ENCODE measurements at regions of chr18 and their contacts with region 1.

Region 1: GRCh38 chr18:75041586-75041985 is 167.4 kb downstream of the PTGR3 start:
- DNase-seq: no peak
- H3K4me3 ChIP-seq: no peak overlapping the region
- H3K27ac ChIP-seq: no peak overlapping the region
- H3K4me1 ChIP-seq: peaks cover 0 to 9% (median 0%) of the 10 kb centered on the region in 4 experiments; a peak in 1 of 7 replicates
- H3K27me3 ChIP-seq: no peaks in the 10 kb centered on the region; a peak in 1 of 7 replicates
- CTCF ChIP-seq: peak in 2 of 3 experiments; percentile 28 to 64; a peak in 2 of 4 replicates
- EP300 ChIP-seq: no peak
- POLR2A ChIP-seq: no peak
- RAD21 ChIP-seq: peak; percentile 42 to 48

Region 2: GRCh38 chr18:74896390-74896991 is 145.1 kb before region 1 on chr18:
- CTCF ChIA-PET with region 1: interaction called, 14 read pairs
- POLR2A ChIA-PET with region 1: no interaction called
- DNase-seq: peak in 1 of 2 experiments; percentile 48
- H3K4me3 ChIP-seq: no peak overlapping the region
- H3K27ac ChIP-seq: no peak overlapping the region
- H3K4me1 ChIP-seq: peaks cover 0 to 3% (median 0%) of the 10 kb centered on the region in 4 experiments; a peak in 1 of 7 replicates
- H3K27me3 ChIP-seq: no peaks in the 10 kb centered on the region
- CTCF ChIP-seq: peak; percentile 78 to 90 (median 85)
- EP300 ChIP-seq: no peak
- POLR2A ChIP-seq: no peak
- RAD21 ChIP-seq: peak; percentile 82 to 91

Region 3: GRCh38 chr18:74957601-74958224 is 83.9 kb before region 1 on chr18:
- CTCF ChIA-PET with region 1: no interaction called
- POLR2A ChIA-PET with region 1: no interaction called
- DNase-seq: no peak
- H3K4me3 ChIP-seq: no peak overlapping the region
- H3K27ac ChIP-seq: no peak overlapping the region
- H3K4me1 ChIP-seq: no peaks in the 10 kb centered on the region; a peak in 1 of 7 replicates
- H3K27me3 ChIP-seq: no peaks in the 10 kb centered on the region
- CTCF ChIP-seq: no peak
- EP300 ChIP-seq: no peak
- POLR2A ChIP-seq: no peak
- RAD21 ChIP-seq: no peak

Region 4: GRCh38 chr18:75023473-75023872 is 18.1 kb before region 1 on chr18:
- CTCF ChIA-PET with region 1: interaction called, 15 read pairs
- POLR2A ChIA-PET with region 1: no interaction called
- DNase-seq: no peak
- H3K4me3 ChIP-seq: no peak overlapping the region
- H3K27ac ChIP-seq: no peak overlapping the region
- H3K4me1 ChIP-seq: no peaks in the 10 kb centered on the region
- H3K27me3 ChIP-seq: no peaks in the 10 kb centered on the region
- CTCF ChIP-seq: no peak
- EP300 ChIP-seq: no peak
- POLR2A ChIP-seq: no peak
- RAD21 ChIP-seq: no peak

Region 5: DNA sequence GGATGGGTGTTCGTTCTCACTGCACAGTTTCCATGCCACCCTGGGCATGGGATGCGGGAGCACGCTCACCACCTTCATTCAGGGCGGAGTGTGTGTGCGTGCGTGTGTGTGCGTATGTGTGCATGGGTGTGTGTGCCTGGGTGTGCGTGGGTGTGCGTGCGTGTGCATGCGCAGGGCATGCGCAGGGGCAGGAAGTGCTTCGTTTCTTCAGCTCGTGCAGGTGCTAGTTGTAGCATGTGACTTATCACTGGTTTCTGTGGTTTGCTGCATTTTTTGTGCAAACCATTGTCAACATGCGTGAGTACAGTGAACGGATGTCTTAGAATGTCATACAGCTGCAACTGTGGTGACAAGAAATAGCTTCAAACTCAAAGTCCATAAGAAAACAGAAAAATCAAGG is 12.1 kb before region 1 on chr18:
- CTCF ChIA-PET with region 1: interaction called, 15 read pairs
- POLR2A ChIA-PET with region 1: no interaction called
- DNase-seq: no peak
- H3K4me3 ChIP-seq: no peak overlapping the region
- H3K27ac ChIP-seq: no peak overlapping the region
- H3K4me1 ChIP-seq: peaks cover 0 to 6% (median 3%) of the 10 kb centered on the region in 4 experiments; a peak in 3 of 7 replicates
- H3K27me3 ChIP-seq: no peaks in the 10 kb centered on the region; a peak in 1 of 7 replicates
- CTCF ChIP-seq: no peak
- EP300 ChIP-seq: no peak
- POLR2A ChIP-seq: no peak
- RAD21 ChIP-seq: no peak

Region 6: DNA sequence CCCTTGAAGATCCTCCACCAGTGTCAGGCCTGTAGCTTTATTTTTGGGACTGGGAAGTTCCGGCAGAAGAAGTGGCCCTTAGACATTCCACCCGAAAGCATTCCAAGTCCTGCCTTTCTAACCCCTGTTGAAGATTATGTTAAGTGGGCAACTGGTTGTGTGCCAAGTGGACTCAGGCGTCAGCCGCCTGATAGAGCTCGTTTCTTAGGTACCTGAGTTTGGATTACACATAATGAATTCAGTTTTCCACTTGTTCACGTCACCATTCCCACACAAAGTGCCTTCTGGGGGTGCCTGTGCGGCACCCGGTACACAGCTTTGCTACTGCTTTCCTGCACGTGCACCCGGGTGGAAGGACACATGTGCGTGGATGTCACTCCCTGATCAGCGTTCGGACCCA is 10.9 kb after region 1 on chr18:
- CTCF ChIA-PET with region 1: interaction called, 35 read pairs
- POLR2A ChIA-PET with region 1: no interaction called
- DNase-seq: no peak
- H3K4me3 ChIP-seq: no peak overlapping the region
- H3K27ac ChIP-seq: no peak overlapping the region
- H3K4me1 ChIP-seq: no peaks in the 10 kb centered on the region
- H3K27me3 ChIP-seq: no peaks in the 10 kb centered on the region
- CTCF ChIP-seq: no peak
- EP300 ChIP-seq: no peak
- POLR2A ChIP-seq: no peak
- RAD21 ChIP-seq: no peak

Region 7: DNA sequence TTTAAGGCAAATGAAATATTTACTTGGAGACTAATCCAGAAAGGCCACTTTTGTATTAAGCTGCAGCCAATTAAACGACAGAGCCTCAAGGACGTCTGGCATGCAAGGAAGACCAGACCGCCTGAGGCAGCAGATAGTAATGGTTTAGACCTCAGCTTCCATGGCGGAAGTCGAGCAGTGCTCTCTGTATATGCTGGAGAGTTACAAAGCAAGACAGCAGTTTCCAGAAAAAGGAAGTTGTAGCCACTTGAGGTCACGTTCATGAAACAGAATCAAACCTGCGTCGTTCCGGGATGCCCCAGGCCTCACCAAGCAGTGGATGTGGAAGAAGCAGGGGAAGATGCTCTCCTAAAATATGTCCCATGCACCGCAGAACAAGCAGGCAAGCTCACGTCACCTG is 25.4 kb after region 1 on chr18:
- CTCF ChIA-PET with region 1: interaction called, 14 read pairs
- POLR2A ChIA-PET with region 1: no interaction called
- DNase-seq: no peak
- H3K4me3 ChIP-seq: no peak overlapping the region
- H3K27ac ChIP-seq: no peak overlapping the region
- H3K4me1 ChIP-seq: peaks cover 0 to 4% (median 0%) of the 10 kb centered on the region in 4 experiments; a peak in 2 of 7 replicates
- H3K27me3 ChIP-seq: no peaks in the 10 kb centered on the region
- CTCF ChIP-seq: no peak
- EP300 ChIP-seq: no peak
- POLR2A ChIP-seq: no peak
- RAD21 ChIP-seq: no peak

Measured in H1 (cell line).